ENCODE measurements at regions of chr1 and their contacts with region 1.

Region 1: GRCh38 chr1:219660666-219661463 is 48.0 kb upstream of the ZC3H11B start:
- DNase-seq: peak; percentile 62
- H3K4me3 Mint-ChIP-seq: no peak overlapping the region
- H3K27ac Mint-ChIP-seq: no peak overlapping the region
- H3K4me1 Mint-ChIP-seq: peaks cover 3% of the 10 kb centered on the region
- H3K27me3 Mint-ChIP-seq: peaks cover 12% of the 10 kb centered on the region

Region 2: DNA sequence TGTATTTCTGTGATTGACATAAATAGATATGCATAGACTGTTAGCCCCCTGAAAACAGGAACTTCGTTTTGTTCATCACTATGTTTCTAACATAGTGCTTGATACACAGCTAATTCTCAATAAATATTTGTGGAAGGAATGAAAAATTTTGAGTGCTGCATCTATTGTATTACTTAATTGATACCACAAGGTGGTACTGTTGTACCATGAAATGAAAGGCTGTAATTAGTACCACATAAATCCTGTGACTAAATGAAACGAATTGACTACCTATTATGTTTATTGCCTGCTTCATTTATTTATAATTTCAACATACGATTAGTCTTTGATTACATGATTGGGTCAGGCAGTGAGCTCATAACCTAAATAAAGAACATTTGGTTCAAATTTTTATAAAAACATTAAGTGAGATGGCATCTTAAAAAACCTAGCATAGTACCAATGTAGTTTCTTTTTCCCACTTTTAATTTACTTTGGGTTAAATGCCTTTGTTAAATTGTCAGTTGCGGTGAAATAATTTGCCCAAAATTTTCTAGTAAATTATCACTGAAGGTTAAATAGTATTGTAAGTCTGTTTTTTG is 1330.7 kb before region 1 on chr1:
- CTCF ChIA-PET with region 1: no interaction called
- POLR2A ChIA-PET with region 1: no interaction called
- intact Hi-C with region 1: loop called (anchors 5 kb)
- DNase-seq: no peak
- H3K4me3 Mint-ChIP-seq: no peak overlapping the region
- H3K27ac Mint-ChIP-seq: no peak overlapping the region
- H3K4me1 Mint-ChIP-seq: no peaks in the 10 kb centered on the region
- H3K27me3 Mint-ChIP-seq: no peaks in the 10 kb centered on the region

Region 3: DNA sequence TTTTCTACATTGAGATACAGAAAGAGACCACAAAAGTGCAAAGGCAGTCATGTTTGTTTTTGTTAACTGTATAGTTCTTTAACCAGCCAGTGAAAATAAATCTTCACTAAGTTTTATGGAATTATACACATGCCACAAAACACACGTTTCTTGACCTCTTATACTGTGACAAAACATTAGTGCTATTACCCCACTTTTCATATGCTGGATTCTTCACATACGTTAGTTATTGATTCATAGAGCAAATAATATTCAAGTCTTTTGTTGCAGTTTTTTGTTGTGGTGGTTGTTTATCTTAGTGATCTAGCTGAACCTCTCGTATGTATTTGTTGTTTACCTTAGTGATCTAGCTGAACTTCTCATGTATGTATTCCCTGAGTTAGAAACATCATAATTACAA is 459.2 kb before region 1 on chr1:
- CTCF ChIA-PET with region 1: no interaction called
- POLR2A ChIA-PET with region 1: no interaction called
- intact Hi-C with region 1: loop called (anchors 5 kb)
- DNase-seq: no peak
- H3K4me3 Mint-ChIP-seq: no peak overlapping the region
- H3K27ac Mint-ChIP-seq: no peak overlapping the region
- H3K4me1 Mint-ChIP-seq: no peaks in the 10 kb centered on the region
- H3K27me3 Mint-ChIP-seq: no peaks in the 10 kb centered on the region

Region 4: DNA sequence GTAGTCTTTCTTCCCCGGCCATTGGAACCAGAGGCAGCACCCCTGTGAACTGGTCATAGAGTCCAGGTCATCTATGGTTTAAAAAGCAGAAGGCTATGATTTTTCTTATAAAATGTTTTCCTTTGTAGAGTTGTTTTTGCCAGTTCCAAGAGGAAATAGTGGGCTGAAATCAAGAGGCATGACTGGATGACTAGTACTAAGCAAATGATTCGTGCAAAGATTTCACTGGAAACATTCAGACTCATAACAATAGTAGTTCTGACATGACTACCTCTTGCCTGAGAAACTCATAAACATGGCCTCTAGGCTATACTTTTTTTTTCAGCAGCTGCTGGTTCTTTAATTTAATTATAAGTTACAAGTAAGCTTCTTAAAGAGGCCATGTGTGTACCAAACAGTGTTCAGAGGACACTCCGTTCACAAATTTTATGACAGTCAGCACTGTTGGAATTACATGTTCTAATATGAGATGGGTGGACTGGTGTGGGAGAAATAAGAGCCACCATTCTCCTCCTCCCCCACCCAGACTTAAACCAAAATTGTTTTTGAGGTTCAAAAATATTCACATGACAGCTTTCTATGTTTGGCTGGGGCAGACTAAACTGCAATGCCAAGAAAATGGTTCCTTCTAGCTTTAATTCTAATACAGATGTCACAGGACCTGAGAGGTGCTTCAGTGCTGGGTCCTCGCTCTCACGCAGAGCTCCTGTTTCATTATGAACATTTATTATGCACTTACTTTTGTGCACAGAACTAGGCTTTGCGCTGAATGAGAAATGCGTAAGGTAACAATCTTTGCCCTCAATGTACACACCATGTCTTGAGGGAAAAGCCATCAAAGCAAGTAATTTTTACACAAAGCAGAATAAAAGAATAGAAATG is 195.4 kb before region 1 on chr1:
- CTCF ChIA-PET with region 1: no interaction called
- POLR2A ChIA-PET with region 1: no interaction called
- intact Hi-C with region 1: no loop called
- DNase-seq: peak; percentile 16
- H3K4me3 Mint-ChIP-seq: no peak overlapping the region
- H3K27ac Mint-ChIP-seq: peak overlapping the region; percentile 66
- H3K4me1 Mint-ChIP-seq: peaks cover 11% of the 10 kb centered on the region
- H3K27me3 Mint-ChIP-seq: peaks cover 2% of the 10 kb centered on the region